ENCODE measurements at regions of chr12 and their contacts with region 1.

Region 1: GRCh38 chr12:14239350-14239934 is 126.0 kb upstream of the ATF7IP start:
- DNase-seq: peak in 1 of 2 experiments; percentile 47
- ATAC-seq: peak; percentile 86 to 92
- H3K4me3 ChIP-seq: no peak overlapping the region
- H3K27ac ChIP-seq: 0 out of 6 replicates have a peak overlapping the region, but pooled peaks of 1 of the 2 experiments have one; percentile 18
- H3K4me1 ChIP-seq: no peaks in the 10 kb centered on the region
- CTCF ChIP-seq: no peak
- EP300 ChIP-seq: no peak
- POLR2A ChIP-seq: no peak
- RAD21 ChIP-seq: 0 out of 5 replicates have a peak, but pooled peaks of 1 of the 2 experiments have one; percentile 11

Region 2: GRCh38 chr12:14365294-14366208 is 126.1 kb after region 1 on chr12 and contains the start of gene ATF7IP:
- CTCF ChIA-PET with region 1: interaction called, 7 read pairs
- POLR2A ChIA-PET with region 1: interaction called, 10 read pairs
- DNase-seq: peak; percentile 99 to 100
- ATAC-seq: peak; percentile 98 to 99
- H3K4me3 ChIP-seq: peak within 1 kb of the TSS; percentile 59
- H3K27ac ChIP-seq: peak within 1 kb of the TSS; percentile 86 to 94
- H3K4me1 ChIP-seq: no peaks in the 10 kb centered on the region
- CTCF ChIP-seq: peak; percentile 54
- EP300 ChIP-seq: no peak
- POLR2A ChIP-seq: peak; percentile 77
- RAD21 ChIP-seq: peak; percentile 46 to 50
- polyA plus RNA-seq, gene ATF7IP: 14.2 and 15.2 TPM in 2 replicates

Region 3: GRCh38 chr12:14618983-14619382 is 379.5 kb after region 1 on chr12:
- CTCF ChIA-PET with region 1: interaction called, 45 read pairs
- POLR2A ChIA-PET with region 1: no interaction called
- DNase-seq: peak; percentile 10 to 37
- ATAC-seq: peak in 1 of 2 experiments; percentile 67; a peak in 3 of 6 replicates
- H3K4me3 ChIP-seq: no peak overlapping the region
- H3K27ac ChIP-seq: no peak overlapping the region
- H3K4me1 ChIP-seq: no peaks in the 10 kb centered on the region
- CTCF ChIP-seq: peak; percentile 28; the same call in 1 of the 3 replicates
- EP300 ChIP-seq: no peak
- POLR2A ChIP-seq: no peak
- RAD21 ChIP-seq: peak in 1 of 2 experiments; percentile 47; a peak in 2 of 5 replicates

Region 4: GRCh38 chr12:14664510-14664909 is 425.1 kb after region 1 on chr12:
- CTCF ChIA-PET with region 1: interaction called, 35 read pairs
- POLR2A ChIA-PET with region 1: no interaction called
- DNase-seq: peak; percentile 8 to 58
- ATAC-seq: peak in 1 of 2 experiments; percentile 67; a peak in 2 of 6 replicates
- H3K4me3 ChIP-seq: no peak overlapping the region
- H3K27ac ChIP-seq: no peak overlapping the region
- H3K4me1 ChIP-seq: no peaks in the 10 kb centered on the region
- CTCF ChIP-seq: peak; percentile 63
- EP300 ChIP-seq: no peak
- POLR2A ChIP-seq: no peak
- RAD21 ChIP-seq: peak; percentile 70 to 79